PC-3 (cell line): ENCODE measurements at regions of chr5 and their contacts with region 1.

Region 1: DNA sequence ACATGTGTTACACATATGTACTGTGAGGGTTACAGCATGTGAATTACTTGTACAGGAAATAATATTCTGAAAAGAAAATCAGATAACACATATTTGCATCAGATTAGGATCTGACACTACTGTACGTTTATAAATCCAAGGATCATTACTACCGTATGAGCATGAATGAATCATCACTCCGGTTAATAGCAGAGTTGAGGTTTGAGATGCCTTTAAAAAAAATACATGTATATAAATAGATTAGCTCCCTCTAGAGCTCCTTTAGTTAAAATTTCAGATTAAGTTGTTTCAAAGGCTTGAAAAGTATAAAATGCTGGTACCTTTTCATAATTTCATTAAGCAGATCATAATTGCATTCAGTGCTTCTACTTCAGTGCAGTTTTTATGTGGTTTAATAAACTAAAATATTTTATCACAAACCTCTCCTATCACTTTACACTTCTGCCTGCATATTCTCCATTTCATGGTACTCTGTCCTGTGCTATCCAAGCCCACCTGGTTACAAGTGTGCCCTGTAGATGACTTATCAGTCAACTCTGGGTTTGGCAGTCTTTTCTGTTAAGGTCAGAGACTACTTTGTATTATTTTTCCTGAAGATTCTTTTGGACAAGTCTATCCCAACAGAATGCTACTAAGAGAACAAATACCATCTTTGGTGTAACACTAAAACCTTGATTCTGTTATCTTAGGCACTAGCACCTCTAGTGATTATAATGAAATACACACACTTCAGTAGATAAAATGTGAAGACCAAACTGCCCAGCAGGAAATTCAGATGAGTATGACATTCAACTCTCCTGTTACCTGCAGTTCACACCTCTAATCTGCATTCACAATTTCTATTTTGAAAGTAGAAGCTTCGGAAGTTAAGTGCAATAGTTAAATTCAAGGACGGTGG is 48.0 kb upstream of the POU5F2 start:
- DNase-seq: peak; percentile 90
- ATAC-seq: peak; percentile 92
- H3K4me3 ChIP-seq: no peak overlapping the region
- H3K27ac ChIP-seq: peak overlapping the region; percentile 27
- H3K4me1 ChIP-seq: peaks cover 26% of the 10 kb centered on the region
- H3K27me3 ChIP-seq: no peaks in the 10 kb centered on the region
- CTCF ChIP-seq: peak; percentile 62

Region 2: GRCh38 chr5:93649234-93649900 is 140.1 kb before region 1 on chr5:
- CTCF ChIA-PET with region 1: no interaction called
- POLR2A ChIA-PET with region 1: no interaction called
- intact Hi-C with region 1: no loop called
- DNase-seq: no peak
- ATAC-seq: no peak
- H3K4me3 ChIP-seq: no peak overlapping the region
- H3K27ac ChIP-seq: no peak overlapping the region
- H3K4me1 ChIP-seq: no peaks in the 10 kb centered on the region
- H3K27me3 ChIP-seq: no peaks in the 10 kb centered on the region
- CTCF ChIP-seq: no peak

Region 3: DNA sequence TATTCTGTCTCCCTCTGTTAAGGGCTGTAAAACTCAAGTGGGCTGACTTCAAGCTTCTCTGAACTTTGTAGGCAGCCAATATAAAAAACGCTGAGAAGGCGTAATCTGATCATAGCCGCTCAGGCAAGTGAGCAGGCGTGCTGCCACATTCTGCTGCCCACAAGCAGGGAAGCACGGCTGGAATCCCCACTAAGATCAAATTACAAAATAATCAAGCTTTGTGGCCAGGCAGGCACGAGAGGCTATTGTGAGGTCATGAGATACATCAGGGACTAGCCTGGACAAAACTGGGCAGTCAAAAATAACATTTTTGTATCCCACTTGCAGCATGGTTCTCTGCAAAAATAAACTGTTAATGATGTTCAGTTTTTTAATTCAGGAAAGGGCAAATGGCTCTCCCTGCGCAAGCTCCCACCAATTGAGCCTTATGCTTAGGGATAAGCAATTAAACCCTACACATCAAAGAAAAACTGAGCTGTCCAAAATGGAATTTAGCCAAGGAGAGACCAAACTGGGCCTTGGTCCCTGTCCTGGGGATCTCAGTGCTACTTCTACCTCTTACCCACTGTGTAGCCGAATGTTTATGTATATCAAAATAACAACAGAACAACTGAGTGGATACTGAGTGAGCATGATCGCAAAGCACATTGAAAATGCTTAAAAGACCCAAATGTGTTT is 111.9 kb before region 1 on chr5:
- CTCF ChIA-PET with region 1: interaction called, 5 read pairs
- POLR2A ChIA-PET with region 1: no interaction called
- intact Hi-C with region 1: loop called (anchors 10 kb)
- DNase-seq: peak; percentile 82
- ATAC-seq: peak; percentile 94
- H3K4me3 ChIP-seq: no peak overlapping the region
- H3K27ac ChIP-seq: no peak overlapping the region
- H3K4me1 ChIP-seq: peaks cover 11% of the 10 kb centered on the region
- H3K27me3 ChIP-seq: no peaks in the 10 kb centered on the region
- CTCF ChIP-seq: no peak

Region 4: GRCh38 chr5:93926831-93927620 is 137.6 kb after region 1 on chr5:
- CTCF ChIA-PET with region 1: no interaction called
- POLR2A ChIA-PET with region 1: no interaction called
- intact Hi-C with region 1: no loop called
- DNase-seq: no peak
- ATAC-seq: no peak
- H3K4me3 ChIP-seq: no peak overlapping the region
- H3K27ac ChIP-seq: no peak overlapping the region
- H3K4me1 ChIP-seq: peaks cover 5% of the 10 kb centered on the region
- H3K27me3 ChIP-seq: no peaks in the 10 kb centered on the region
- CTCF ChIP-seq: no peak

Region 5: GRCh38 chr5:93978222-93978621 is 188.8 kb after region 1 on chr5:
- CTCF ChIA-PET with region 1: no interaction called
- POLR2A ChIA-PET with region 1: no interaction called
- intact Hi-C with region 1: no loop called
- DNase-seq: no peak
- ATAC-seq: no peak
- H3K4me3 ChIP-seq: no peak overlapping the region
- H3K27ac ChIP-seq: no peak overlapping the region
- H3K4me1 ChIP-seq: no peaks in the 10 kb centered on the region
- H3K27me3 ChIP-seq: no peaks in the 10 kb centered on the region
- CTCF ChIP-seq: no peak

Region 6: GRCh38 chr5:94397508-94397907 is 608.1 kb after region 1 on chr5:
- CTCF ChIA-PET with region 1: no interaction called
- POLR2A ChIA-PET with region 1: no interaction called
- intact Hi-C with region 1: no loop called
- DNase-seq: no peak
- ATAC-seq: no peak
- H3K4me3 ChIP-seq: no peak overlapping the region
- H3K27ac ChIP-seq: no peak overlapping the region
- H3K4me1 ChIP-seq: no peaks in the 10 kb centered on the region
- H3K27me3 ChIP-seq: no peaks in the 10 kb centered on the region
- CTCF ChIP-seq: peak; percentile 36; the same call in 1 of the 2 replicates